Dendritic cell treated with granulocyte-macrophage colony-stimulating factor and Interleukin-4, amounts not matched to agents 40 ng/mL and 50 ng/mL, for 4 days (primary cell): ENCODE measurements at regions of chr4 and their contacts with region 1.

Region 1: GRCh38 chr4:1249148-1249730 is 309 bp upstream of the CTBP1 start:
- H3K4me3 Mint-ChIP-seq: peak overlapping the region; percentile 90
- H3K27ac Mint-ChIP-seq: peak overlapping the region; percentile 95
- H3K4me1 Mint-ChIP-seq: peaks cover 45% of the 10 kb centered on the region
- H3K27me3 Mint-ChIP-seq: no peaks in the 10 kb centered on the region

Region 2: GRCh38 chr4:1011022-1011694 is 238.1 kb before region 1 on chr4 and contains the start of gene FGFRL1:
- intact Hi-C with region 1: loop called (anchors 10 kb)
- H3K4me3 Mint-ChIP-seq: peak within 1 kb of the TSS; percentile 81
- H3K27ac Mint-ChIP-seq: peak within 1 kb of the TSS; percentile 75
- H3K4me1 Mint-ChIP-seq: peaks cover 37% of the 10 kb centered on the region
- H3K27me3 Mint-ChIP-seq: peaks cover 34% of the 10 kb centered on the region

Region 3: DNA sequence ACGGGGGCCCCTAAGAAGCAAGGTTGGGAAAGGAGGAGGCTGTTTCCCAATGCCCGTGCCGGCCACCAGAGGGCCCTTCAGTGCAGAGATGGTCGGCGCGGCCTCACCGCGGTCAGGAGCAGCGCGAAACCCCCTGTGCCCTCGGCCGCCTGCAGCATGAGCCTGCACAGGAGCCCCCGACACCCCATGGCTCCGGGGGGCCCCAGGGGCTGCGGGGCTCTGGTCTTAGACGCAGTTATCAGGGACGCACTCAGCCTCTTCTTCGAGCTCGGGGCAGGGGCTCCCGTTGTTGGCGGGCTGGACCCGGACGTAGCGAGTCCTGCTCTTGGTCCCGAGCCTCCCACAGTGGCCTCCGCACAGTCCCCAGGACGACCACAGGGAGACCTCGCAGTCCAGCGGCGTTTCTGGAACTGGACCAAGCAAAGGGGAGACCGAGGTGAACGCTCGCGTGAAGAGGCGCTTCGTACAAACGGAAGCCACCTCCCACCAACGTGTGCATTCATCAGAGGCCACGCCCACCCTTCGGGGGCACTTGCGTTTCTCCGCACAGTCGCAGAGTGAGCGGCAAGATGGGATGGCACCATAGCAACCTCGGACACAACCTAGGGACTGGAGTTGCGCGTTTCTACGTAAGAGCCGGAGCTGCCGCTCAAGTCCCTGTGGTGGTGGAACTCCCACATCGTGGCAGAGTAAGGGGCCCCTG is 81.8 kb before region 1 on chr4:
- intact Hi-C with region 1: loop called (anchors 5 kb)
- H3K4me3 Mint-ChIP-seq: peak overlapping the region; percentile 77
- H3K27ac Mint-ChIP-seq: peak overlapping the region; percentile 12
- H3K4me1 Mint-ChIP-seq: peaks cover 48% of the 10 kb centered on the region
- H3K27me3 Mint-ChIP-seq: peaks cover 69% of the 10 kb centered on the region

Region 4: GRCh38 chr4:1289207-1290164 is 40.2 kb after region 1 on chr4 and contains the start of gene MAEA:
- intact Hi-C with region 1: loop called (anchors 1 kb)
- H3K4me3 Mint-ChIP-seq: peak within 1 kb of the TSS; percentile 91
- H3K27ac Mint-ChIP-seq: peak within 1 kb of the TSS; percentile 88
- H3K4me1 Mint-ChIP-seq: peaks cover 38% of the 10 kb centered on the region
- H3K27me3 Mint-ChIP-seq: peaks cover 1% of the 10 kb centered on the region

Region 5: GRCh38 chr4:1300466-1301455 is 51.5 kb after region 1 on chr4:
- intact Hi-C with region 1: no loop called
- H3K4me3 Mint-ChIP-seq: peak overlapping the region; percentile 48
- H3K27ac Mint-ChIP-seq: peak overlapping the region; percentile 79
- H3K4me1 Mint-ChIP-seq: peaks cover 65% of the 10 kb centered on the region
- H3K27me3 Mint-ChIP-seq: no peaks in the 10 kb centered on the region

Region 6: GRCh38 chr4:1346781-1347409 is 97.7 kb after region 1 on chr4 and contains the start of gene UVSSA:
- intact Hi-C with region 1: loop called (anchors 1 kb)
- H3K4me3 Mint-ChIP-seq: peak within 1 kb of the TSS; percentile 79
- H3K27ac Mint-ChIP-seq: peak within 1 kb of the TSS; percentile 91
- H3K4me1 Mint-ChIP-seq: peaks cover 50% of the 10 kb centered on the region
- H3K27me3 Mint-ChIP-seq: no peaks in the 10 kb centered on the region